ENCODE measurements at regions of chr2 and their contacts with region 1.

Region 1: GRCh38 chr2:75862547-75862946 is 151.8 kb upstream of the GCFC2 start:
- DNase-seq: no peak
- ATAC-seq: no peak
- H3K4me3 ChIP-seq: no peak overlapping the region
- H3K27ac ChIP-seq: no peak overlapping the region
- H3K4me1 ChIP-seq: no peaks in the 10 kb centered on the region
- H3K27me3 ChIP-seq: no peaks in the 10 kb centered on the region
- CTCF ChIP-seq: no peak
- POLR2A ChIP-seq: no peak
- RAD21 ChIP-seq: no peak

Region 2: DNA sequence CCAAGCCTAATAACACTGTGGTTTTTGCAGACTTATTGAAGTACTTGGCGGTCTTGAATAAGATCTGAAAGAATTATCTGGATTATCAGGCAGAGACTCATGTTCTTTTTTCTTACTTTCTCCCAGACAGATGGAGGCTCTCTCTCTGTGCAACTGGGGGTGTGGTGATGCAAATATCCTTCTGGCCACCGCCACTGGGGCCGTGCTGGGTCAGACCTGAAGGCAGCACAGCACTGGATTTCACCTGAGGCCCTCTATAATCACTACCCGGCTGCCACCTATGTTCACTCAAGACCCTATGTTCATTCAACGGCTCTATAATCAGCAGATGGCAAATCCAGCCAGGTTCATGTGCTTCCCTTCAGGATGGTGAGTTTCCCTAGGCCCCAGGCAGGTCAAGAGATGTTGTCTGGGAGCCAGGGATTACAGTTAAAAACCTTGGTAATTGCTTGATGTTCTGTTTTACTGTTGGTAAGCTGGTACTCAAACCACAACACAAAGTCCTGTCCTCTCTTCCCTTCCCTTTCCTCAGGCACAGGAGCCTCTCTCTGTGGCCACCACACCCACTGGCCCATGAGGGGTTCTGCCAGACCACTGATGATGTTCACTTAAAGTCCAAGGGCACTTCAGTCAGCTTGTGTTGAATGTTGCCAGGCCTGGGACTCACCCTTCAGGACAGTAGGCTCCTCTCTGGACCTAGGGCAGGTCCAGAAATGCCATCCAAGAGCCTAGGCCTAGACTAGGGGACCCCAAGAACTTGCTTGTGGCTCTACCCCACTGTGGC is 53.5 kb after region 1 on chr2:
- CTCF ChIA-PET with region 1: no interaction called
- POLR2A ChIA-PET with region 1: no interaction called
- dilution Hi-C with region 1: no loop called
- in situ Hi-C with region 1: no loop called
- intact Hi-C with region 1: loop called (anchors 5 kb)
- DNase-seq: no peak
- ATAC-seq: no peak
- H3K4me3 ChIP-seq: no peak overlapping the region
- H3K27ac ChIP-seq: no peak overlapping the region
- H3K4me1 ChIP-seq: no peaks in the 10 kb centered on the region
- H3K27me3 ChIP-seq: no peaks in the 10 kb centered on the region
- CTCF ChIP-seq: no peak
- POLR2A ChIP-seq: no peak
- RAD21 ChIP-seq: no peak

Region 3: GRCh38 chr2:75936311-75936710 is 73.8 kb after region 1 on chr2:
- CTCF ChIA-PET with region 1: no interaction called
- POLR2A ChIA-PET with region 1: no interaction called
- dilution Hi-C with region 1: no loop called
- in situ Hi-C with region 1: no loop called
- intact Hi-C with region 1: no loop called
- DNase-seq: no peak
- ATAC-seq: no peak
- H3K4me3 ChIP-seq: no peak overlapping the region
- H3K27ac ChIP-seq: no peak overlapping the region
- H3K4me1 ChIP-seq: no peaks in the 10 kb centered on the region
- H3K27me3 ChIP-seq: no peaks in the 10 kb centered on the region
- CTCF ChIP-seq: no peak
- POLR2A ChIP-seq: no peak
- RAD21 ChIP-seq: no peak

Region 4: DNA sequence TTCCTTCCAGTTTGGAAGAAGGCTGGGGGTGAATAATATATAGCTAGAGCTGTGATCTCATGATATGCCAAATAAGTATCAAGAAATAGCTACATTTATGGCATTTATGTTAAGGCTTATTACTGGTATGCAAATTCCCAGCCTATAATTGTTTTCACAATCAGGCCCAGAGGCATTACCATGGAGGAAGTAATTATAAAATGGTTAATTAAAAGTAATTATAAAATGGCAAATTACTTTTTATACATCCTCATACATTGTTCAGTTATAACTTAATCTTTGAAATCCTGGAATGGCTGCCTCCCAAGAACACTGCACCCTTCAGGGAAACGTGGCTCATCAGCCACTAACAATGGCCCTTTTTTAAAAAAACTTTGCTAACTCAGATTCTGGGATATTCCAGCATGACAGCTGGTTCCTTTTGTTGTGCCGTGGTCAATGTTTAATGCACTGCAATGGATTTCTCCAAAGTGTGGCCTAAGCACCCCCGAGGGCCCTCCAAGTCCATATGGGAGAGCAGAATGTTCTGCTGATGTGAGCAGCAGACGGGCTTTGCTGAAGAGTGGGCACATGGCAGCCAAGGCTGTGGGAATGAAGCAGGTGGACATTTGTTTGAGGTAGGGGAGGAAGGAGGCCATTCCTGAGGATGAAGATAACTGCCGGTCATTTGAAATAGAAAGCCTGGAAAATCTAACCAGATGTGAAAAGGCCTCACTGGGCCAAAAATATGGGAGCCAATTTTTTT is 331.7 kb after region 1 on chr2:
- CTCF ChIA-PET with region 1: no interaction called
- POLR2A ChIA-PET with region 1: no interaction called
- dilution Hi-C with region 1: no loop called
- in situ Hi-C with region 1: no loop called
- intact Hi-C with region 1: no loop called
- DNase-seq: no peak
- ATAC-seq: no peak
- H3K4me3 ChIP-seq: no peak overlapping the region
- H3K27ac ChIP-seq: no peak overlapping the region
- H3K4me1 ChIP-seq: no peaks in the 10 kb centered on the region
- H3K27me3 ChIP-seq: no peaks in the 10 kb centered on the region
- CTCF ChIP-seq: no peak
- POLR2A ChIP-seq: no peak
- RAD21 ChIP-seq: no peak

Measured in IMR-90 (cell line).